SK-N-SH (cell line): ENCODE measurements at regions of chr2 and their contacts with region 1.

Region 1: GRCh38 chr2:134454931-134455330 is 201.1 kb downstream of the MGAT5 start:
- DNase-seq: no peak
- H3K4me3 ChIP-seq: no peak overlapping the region
- H3K27ac ChIP-seq: no peak overlapping the region
- H3K4me1 ChIP-seq: no peaks in the 10 kb centered on the region; a peak in 1 of 4 replicates
- H3K27me3 ChIP-seq: no peaks in the 10 kb centered on the region
- CTCF ChIP-seq: no peak
- EP300 ChIP-seq: no peak
- RAD21 ChIP-seq: no peak

Region 2: GRCh38 chr2:133892352-133892913 is 562.5 kb before region 1 on chr2:
- CTCF ChIA-PET with region 1: interaction called, 105 read pairs
- POLR2A ChIA-PET with region 1: no interaction called
- DNase-seq: no peak
- H3K4me3 ChIP-seq: no peak overlapping the region
- H3K27ac ChIP-seq: no peak overlapping the region
- H3K4me1 ChIP-seq: no peaks in the 10 kb centered on the region; a peak in 1 of 4 replicates
- H3K27me3 ChIP-seq: no peaks in the 10 kb centered on the region; the same call in 1 of the 2 replicates
- CTCF ChIP-seq: no peak
- EP300 ChIP-seq: no peak
- RAD21 ChIP-seq: no peak

Region 3: GRCh38 chr2:134118279-134119116 is 336.4 kb before region 1 on chr2:
- CTCF ChIA-PET with region 1: interaction called, 111 read pairs
- POLR2A ChIA-PET with region 1: no interaction called
- DNase-seq: peak; percentile 79
- H3K4me3 ChIP-seq: no peak overlapping the region; a peak in 1 of 4 replicates
- H3K27ac ChIP-seq: peak overlapping the region in 1 of 2 experiments; percentile 62; a peak in 2 of 4 replicates
- H3K4me1 ChIP-seq: peaks cover 0 to 28% of the 10 kb centered on the region in 2 experiments; a peak in 2 of 4 replicates
- H3K27me3 ChIP-seq: no peaks in the 10 kb centered on the region
- CTCF ChIP-seq: peak; percentile 89
- EP300 ChIP-seq: no peak
- RAD21 ChIP-seq: peak; percentile 97

Region 4: DNA sequence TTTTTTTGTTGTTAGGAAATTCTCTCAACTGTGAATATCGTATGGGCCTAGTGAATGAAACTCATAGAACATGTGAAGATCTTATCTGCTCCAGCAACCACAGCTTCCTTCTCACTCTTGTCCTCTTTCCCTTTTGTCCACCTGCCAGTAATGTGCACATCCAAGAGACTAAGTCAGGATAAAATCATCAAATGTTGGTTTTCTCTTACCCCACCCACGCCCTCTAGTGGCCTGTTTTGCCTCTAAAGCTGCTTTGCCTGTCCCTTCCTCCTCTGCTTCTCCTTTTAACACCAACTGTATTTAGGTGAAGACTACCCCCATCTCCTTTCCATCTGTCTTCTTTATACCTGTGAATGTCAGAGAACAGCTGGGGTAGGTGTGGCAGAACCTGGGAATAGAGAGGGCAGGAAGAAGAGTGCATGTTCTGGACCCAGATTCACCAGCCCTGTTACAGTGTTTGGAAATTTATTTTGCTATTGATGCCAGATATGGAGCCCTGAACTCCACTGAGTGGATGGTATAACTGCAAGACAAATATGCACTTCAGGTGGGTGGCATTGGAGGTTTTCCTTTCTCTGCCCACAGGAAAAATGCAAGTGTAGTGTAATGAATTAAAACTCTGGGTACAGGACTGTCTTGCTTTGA is 209.5 kb before region 1 on chr2:
- CTCF ChIA-PET with region 1: interaction called, 10 read pairs
- POLR2A ChIA-PET with region 1: no interaction called
- DNase-seq: peak; percentile 43
- H3K4me3 ChIP-seq: no peak overlapping the region; a peak in 1 of 4 replicates
- H3K27ac ChIP-seq: peak overlapping the region in 1 of 2 experiments; percentile 79; a peak in 2 of 4 replicates
- H3K4me1 ChIP-seq: peaks cover 6 to 33% of the 10 kb centered on the region in 2 experiments; a peak in 3 of 4 replicates
- H3K27me3 ChIP-seq: no peaks in the 10 kb centered on the region
- CTCF ChIP-seq: peak; percentile 90
- EP300 ChIP-seq: no peak
- RAD21 ChIP-seq: peak; percentile 78

Region 5: GRCh38 chr2:134375935-134376334 is 79.0 kb before region 1 on chr2:
- CTCF ChIA-PET with region 1: interaction called, 10 read pairs
- POLR2A ChIA-PET with region 1: no interaction called
- DNase-seq: peak; percentile 23
- H3K4me3 ChIP-seq: no peak overlapping the region
- H3K27ac ChIP-seq: peak overlapping the region in 1 of 2 experiments; percentile 34; a peak in 1 of 4 replicates
- H3K4me1 ChIP-seq: peaks cover 0 to 25% of the 10 kb centered on the region in 2 experiments; a peak in 1 of 4 replicates
- H3K27me3 ChIP-seq: no peaks in the 10 kb centered on the region
- CTCF ChIP-seq: peak; percentile 34; the same call in 1 of the 2 replicates
- EP300 ChIP-seq: no peak
- RAD21 ChIP-seq: peak; percentile 75

Region 6: GRCh38 chr2:134425724-134426496 is 29.0 kb before region 1 on chr2:
- CTCF ChIA-PET with region 1: interaction called, 21 read pairs
- POLR2A ChIA-PET with region 1: no interaction called
- DNase-seq: no peak
- H3K4me3 ChIP-seq: no peak overlapping the region
- H3K27ac ChIP-seq: no peak overlapping the region
- H3K4me1 ChIP-seq: no peaks in the 10 kb centered on the region; a peak in 1 of 4 replicates
- H3K27me3 ChIP-seq: no peaks in the 10 kb centered on the region
- CTCF ChIP-seq: no peak
- EP300 ChIP-seq: no peak
- RAD21 ChIP-seq: no peak

Region 7: GRCh38 chr2:134897932-134898331 is 443.0 kb after region 1 on chr2:
- CTCF ChIA-PET with region 1: interaction called, 22 read pairs
- POLR2A ChIA-PET with region 1: no interaction called
- DNase-seq: peak; percentile 9
- H3K4me3 ChIP-seq: no peak overlapping the region
- H3K27ac ChIP-seq: no peak overlapping the region
- H3K4me1 ChIP-seq: no peaks in the 10 kb centered on the region; a peak in 1 of 4 replicates
- H3K27me3 ChIP-seq: no peaks in the 10 kb centered on the region
- CTCF ChIP-seq: peak; percentile 59
- EP300 ChIP-seq: no peak
- RAD21 ChIP-seq: peak; percentile 64